B cell (primary cell): ENCODE measurements at regions of chrX and their contacts with region 1.

Region 1: GRCh38 chrX:40266490-40267333 is 169.0 kb upstream of the BCOR start:
- DNase-seq: peak; percentile 58
- ATAC-seq: peak; percentile 51
- H3K4me3 ChIP-seq: peak overlapping the region in 4 of 5 experiments; percentile 35 to 50 (median 44)
- H3K4me3 Mint-ChIP-seq: peak overlapping the region; percentile 84
- H3K27ac ChIP-seq: no peak overlapping the region
- H3K27ac Mint-ChIP-seq: peak overlapping the region; percentile 56
- H3K4me1 ChIP-seq: peaks cover 16 to 23% of the 10 kb centered on the region in 2 donors
- H3K4me1 Mint-ChIP-seq: peaks cover 13% of the 10 kb centered on the region
- H3K27me3 ChIP-seq: no peaks in the 10 kb centered on the region
- H3K27me3 Mint-ChIP-seq: no peaks in the 10 kb centered on the region
- CTCF ChIP-seq: peak; percentile 50

Region 2: GRCh38 chrX:39730662-39731397 is 535.9 kb before region 1 on chrX:
- CTCF ChIA-PET with region 1: interaction called, 3 read pairs
- POLR2A ChIA-PET with region 1: no interaction called
- intact Hi-C with region 1: loop called (anchors 5 kb)
- DNase-seq: peak; percentile 57
- ATAC-seq: peak; percentile 60
- H3K4me3 ChIP-seq: no peak overlapping the region
- H3K4me3 Mint-ChIP-seq: peak overlapping the region; percentile 35
- H3K27ac ChIP-seq: no peak overlapping the region
- H3K27ac Mint-ChIP-seq: no peak overlapping the region
- H3K4me1 ChIP-seq: peaks cover 6 to 8% of the 10 kb centered on the region in 2 donors
- H3K4me1 Mint-ChIP-seq: peaks cover 4% of the 10 kb centered on the region
- H3K27me3 ChIP-seq: peaks cover 0 to 12% (median 2%) of the 10 kb centered on the region in 4 experiments
- H3K27me3 Mint-ChIP-seq: peaks cover 5% of the 10 kb centered on the region
- CTCF ChIP-seq: peak; percentile 43

Region 3: DNA sequence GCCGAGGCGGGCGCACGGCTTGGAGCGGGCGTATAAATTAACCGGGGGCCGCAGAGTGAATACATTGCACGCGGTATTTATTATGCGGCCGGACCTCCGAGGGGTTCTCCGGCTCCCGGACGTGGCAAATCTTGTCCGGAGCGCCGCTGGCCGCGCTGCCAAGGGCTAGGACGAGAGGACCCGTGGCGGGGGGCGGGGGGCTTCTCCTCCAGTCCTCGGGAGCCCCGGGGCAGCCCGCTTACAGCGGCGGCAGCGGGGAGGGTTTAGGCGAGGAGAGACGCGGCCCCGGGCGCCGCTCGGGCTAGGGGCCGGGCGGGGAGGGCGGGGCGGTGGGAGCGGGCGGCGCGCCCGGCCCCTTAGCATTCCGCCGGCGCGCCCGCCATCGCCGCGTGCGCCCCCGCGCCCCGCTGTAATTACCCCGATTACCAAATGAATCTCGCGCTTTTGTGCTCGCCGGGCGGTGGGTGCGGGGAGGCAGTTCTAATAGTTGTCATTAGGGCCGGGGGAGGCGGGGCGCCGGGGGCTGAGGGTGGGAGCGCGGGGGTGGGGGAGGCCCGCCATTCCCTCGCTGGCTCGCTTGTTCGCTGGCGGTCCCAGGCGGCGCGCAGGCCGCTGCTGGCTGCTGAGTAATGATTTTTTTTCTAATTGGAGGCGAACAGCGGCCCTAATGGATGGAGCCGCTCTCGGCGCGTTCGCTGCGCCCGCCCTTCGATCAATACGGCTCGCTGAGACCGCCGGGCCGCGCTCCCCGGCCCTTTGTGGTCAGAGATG is 445.6 kb before region 1 on chrX:
- CTCF ChIA-PET with region 1: no interaction called
- POLR2A ChIA-PET with region 1: no interaction called
- intact Hi-C with region 1: no loop called
- DNase-seq: no peak
- ATAC-seq: no peak
- H3K4me3 ChIP-seq: no peak overlapping the region
- H3K4me3 Mint-ChIP-seq: peak overlapping the region; percentile 41
- H3K27ac ChIP-seq: no peak overlapping the region
- H3K27ac Mint-ChIP-seq: no peak overlapping the region
- H3K4me1 ChIP-seq: peaks cover 7 to 9% of the 10 kb centered on the region in 2 donors
- H3K4me1 Mint-ChIP-seq: peaks cover 15% of the 10 kb centered on the region
- H3K27me3 ChIP-seq: peaks cover 0 to 48% (median 12%) of the 10 kb centered on the region in 4 experiments
- H3K27me3 Mint-ChIP-seq: peaks cover 45% of the 10 kb centered on the region
- CTCF ChIP-seq: no peak

Region 4: GRCh38 chrX:40278340-40279090 is 11.8 kb after region 1 on chrX:
- CTCF ChIA-PET with region 1: no interaction called
- POLR2A ChIA-PET with region 1: no interaction called
- intact Hi-C with region 1: no loop called
- DNase-seq: no peak
- ATAC-seq: no peak
- H3K4me3 ChIP-seq: no peak overlapping the region
- H3K4me3 Mint-ChIP-seq: no peak overlapping the region
- H3K27ac ChIP-seq: no peak overlapping the region
- H3K27ac Mint-ChIP-seq: no peak overlapping the region
- H3K4me1 ChIP-seq: peaks cover 6% of the 10 kb centered on the region in 2 donors
- H3K4me1 Mint-ChIP-seq: peaks cover 9% of the 10 kb centered on the region
- H3K27me3 ChIP-seq: peaks cover 0 to 2% (median 0%) of the 10 kb centered on the region in 4 experiments
- H3K27me3 Mint-ChIP-seq: no peaks in the 10 kb centered on the region
- CTCF ChIP-seq: no peak

Region 5: DNA sequence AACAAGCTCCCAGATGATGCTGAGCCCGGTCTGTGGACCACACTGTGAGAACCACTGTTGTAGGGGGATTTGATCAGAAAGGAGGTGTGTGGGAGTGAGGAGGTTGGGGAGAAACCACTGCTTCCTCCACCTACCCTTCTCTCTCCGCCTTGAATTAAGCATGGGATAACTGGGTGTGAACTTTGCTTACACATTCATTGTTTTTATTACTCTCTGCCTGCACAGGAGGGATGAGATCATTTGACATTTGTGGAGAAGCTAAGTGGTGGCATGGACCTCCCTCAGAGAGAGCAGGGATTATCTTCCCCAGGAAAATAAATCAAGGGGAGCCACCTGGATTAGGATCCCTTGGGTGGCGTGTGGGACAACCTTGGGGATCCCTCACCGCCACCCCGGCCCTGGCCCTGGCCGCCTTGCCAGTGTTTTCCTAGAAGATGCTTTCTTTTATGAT is 101.9 kb after region 1 on chrX:
- CTCF ChIA-PET with region 1: no interaction called
- POLR2A ChIA-PET with region 1: no interaction called
- intact Hi-C with region 1: no loop called
- DNase-seq: no peak
- ATAC-seq: no peak
- H3K4me3 ChIP-seq: no peak overlapping the region
- H3K4me3 Mint-ChIP-seq: no peak overlapping the region
- H3K27ac ChIP-seq: no peak overlapping the region
- H3K27ac Mint-ChIP-seq: no peak overlapping the region
- H3K4me1 ChIP-seq: no peaks in the 10 kb centered on the region
- H3K4me1 Mint-ChIP-seq: no peaks in the 10 kb centered on the region
- H3K27me3 ChIP-seq: no peaks in the 10 kb centered on the region
- H3K27me3 Mint-ChIP-seq: peaks cover 2% of the 10 kb centered on the region
- CTCF ChIP-seq: no peak

Region 6: GRCh38 chrX:40434443-40434842 is 167.7 kb after region 1 on chrX:
- CTCF ChIA-PET with region 1: no interaction called
- POLR2A ChIA-PET with region 1: interaction called, 11 read pairs
- intact Hi-C with region 1: no loop called
- DNase-seq: no peak
- ATAC-seq: no peak
- H3K4me3 ChIP-seq: no peak overlapping the region
- H3K4me3 Mint-ChIP-seq: no peak overlapping the region
- H3K27ac ChIP-seq: no peak overlapping the region
- H3K27ac Mint-ChIP-seq: no peak overlapping the region
- H3K4me1 ChIP-seq: no peaks in the 10 kb centered on the region
- H3K4me1 Mint-ChIP-seq: no peaks in the 10 kb centered on the region
- H3K27me3 ChIP-seq: no peaks in the 10 kb centered on the region
- H3K27me3 Mint-ChIP-seq: peaks cover 6% of the 10 kb centered on the region
- CTCF ChIP-seq: no peak

Region 7: DNA sequence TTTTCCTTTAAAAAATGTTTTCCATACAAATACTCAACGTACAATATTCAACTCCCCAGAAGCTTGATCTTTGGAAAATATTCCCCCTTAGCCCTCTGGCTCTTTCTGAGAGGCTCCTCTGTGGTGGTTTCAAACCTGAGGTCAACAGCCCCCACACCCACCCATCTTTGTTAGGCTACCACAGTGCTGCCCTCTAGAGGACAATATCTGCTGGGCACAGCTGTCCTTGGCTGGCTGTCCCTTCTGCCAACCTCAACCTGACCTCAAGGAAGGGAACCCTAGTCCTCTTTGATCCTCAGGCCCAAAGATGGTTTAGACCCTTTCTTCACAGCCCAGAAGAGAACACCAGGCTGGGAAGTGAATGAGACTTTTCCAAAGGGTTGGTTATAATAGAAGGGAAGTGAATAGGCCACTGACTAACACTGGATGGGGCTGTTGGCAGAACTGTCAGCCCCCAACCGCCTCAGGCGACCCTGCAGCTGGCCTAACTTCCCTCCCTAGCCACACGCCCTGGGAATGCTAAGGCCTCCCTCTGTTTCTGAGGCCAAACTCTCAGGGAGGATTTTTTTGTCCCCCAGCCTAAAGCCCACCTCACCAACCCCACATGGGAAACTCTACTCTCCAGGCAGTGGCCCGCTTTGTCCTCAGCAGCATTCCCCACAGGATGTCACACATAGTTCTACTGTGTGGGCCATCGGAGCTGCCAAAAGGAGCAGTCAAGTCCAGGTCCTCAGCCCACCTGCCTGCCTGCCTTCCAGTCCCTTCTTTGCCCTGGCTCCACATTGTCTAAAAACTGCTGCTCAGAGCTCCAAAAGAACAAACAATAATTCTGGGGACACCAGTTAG is 1214.8 kb after region 1 on chrX:
- CTCF ChIA-PET with region 1: no interaction called
- POLR2A ChIA-PET with region 1: no interaction called
- intact Hi-C with region 1: no loop called
- DNase-seq: no peak
- ATAC-seq: no peak
- H3K4me3 ChIP-seq: no peak overlapping the region
- H3K4me3 Mint-ChIP-seq: no peak overlapping the region
- H3K27ac ChIP-seq: no peak overlapping the region
- H3K27ac Mint-ChIP-seq: no peak overlapping the region
- H3K4me1 ChIP-seq: no peaks in the 10 kb centered on the region
- H3K4me1 Mint-ChIP-seq: no peaks in the 10 kb centered on the region
- H3K27me3 ChIP-seq: no peaks in the 10 kb centered on the region
- H3K27me3 Mint-ChIP-seq: no peaks in the 10 kb centered on the region
- CTCF ChIP-seq: no peak